Activated CD4-positive, alpha-beta T cell treated with anti-CD3 and anti-CD28 coated beads, Interleukin-2, amount 10 ng/mL, durations not matched to agents 7 days and 5 days (primary cell): ENCODE measurements at regions of chr7 and their contacts with region 1.

Region 1: DNA sequence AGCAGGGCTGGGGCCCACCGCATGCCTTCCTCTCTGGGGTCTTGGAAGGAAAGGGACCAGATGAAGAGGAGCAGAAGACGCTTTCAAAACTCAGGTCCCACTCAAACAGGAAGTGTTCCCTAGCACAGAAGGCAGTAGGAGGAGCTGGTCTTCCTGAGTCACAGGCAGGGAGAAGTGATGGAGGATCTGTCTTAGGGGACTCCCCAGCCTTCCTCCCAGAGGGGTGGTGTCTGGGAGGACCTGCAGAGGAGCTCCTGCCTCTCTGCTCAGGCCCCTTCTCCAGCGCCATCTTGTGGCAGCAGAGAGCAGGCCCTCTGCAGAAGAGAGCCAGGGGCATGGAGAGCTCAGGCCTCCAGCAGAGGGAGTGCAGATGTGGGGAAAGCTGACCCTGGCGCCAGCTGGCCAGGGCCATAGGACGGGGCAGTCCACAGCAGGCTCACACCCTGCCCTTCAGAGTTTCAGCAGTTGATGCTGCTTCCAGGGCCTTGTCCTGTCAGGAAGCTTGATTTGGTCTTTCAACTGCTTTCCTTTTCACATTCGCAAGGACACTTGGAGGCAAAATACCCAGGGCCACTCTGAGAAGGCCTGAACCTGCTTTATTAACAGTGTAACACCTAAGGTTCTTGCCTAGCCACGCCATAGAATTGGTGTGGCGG is 62.2 kb upstream of the TARP start:
- DNase-seq: peak; percentile 83
- H3K4me3 Mint-ChIP-seq: peak overlapping the region; percentile 69
- H3K27ac Mint-ChIP-seq: peak overlapping the region; percentile 76
- H3K4me1 Mint-ChIP-seq: peaks cover 55% of the 10 kb centered on the region
- H3K27me3 Mint-ChIP-seq: no peaks in the 10 kb centered on the region

Region 2: DNA sequence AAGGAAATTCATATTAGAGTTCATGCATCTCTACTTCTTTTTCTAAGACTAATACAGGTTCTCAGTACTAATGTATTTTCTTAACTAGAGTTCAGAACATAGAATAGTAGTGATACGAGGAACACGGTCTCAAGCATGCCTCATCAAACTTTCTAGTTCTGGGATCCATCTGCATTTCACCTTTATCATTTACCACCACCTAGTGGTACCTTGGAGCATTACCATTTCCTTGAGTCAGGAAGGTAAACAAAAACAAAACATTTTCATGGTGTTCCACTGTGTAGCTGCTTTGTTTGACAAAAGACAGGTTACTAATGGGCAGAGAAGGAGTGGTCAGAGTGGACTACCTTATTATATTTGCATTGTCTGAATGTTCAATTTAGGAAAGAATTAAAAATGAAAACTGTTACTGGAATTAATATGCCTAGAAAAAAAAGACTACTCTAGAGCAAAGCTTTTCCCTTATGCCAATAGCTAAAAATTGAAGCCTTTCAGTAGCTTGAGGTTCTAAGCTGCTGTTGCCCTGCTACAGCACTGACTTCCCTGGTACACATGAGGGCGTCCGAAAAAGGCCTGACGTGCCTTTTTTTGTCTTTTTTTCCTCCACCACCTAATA is 113.0 kb before region 1 on chr7:
- CTCF ChIA-PET with region 1: interaction called, 55 read pairs
- POLR2A ChIA-PET with region 1: interaction called, 3 read pairs
- DNase-seq: peak; percentile 63
- H3K4me3 Mint-ChIP-seq: no peak overlapping the region
- H3K27ac Mint-ChIP-seq: no peak overlapping the region
- H3K4me1 Mint-ChIP-seq: peaks cover 47% of the 10 kb centered on the region
- H3K27me3 Mint-ChIP-seq: no peaks in the 10 kb centered on the region

Region 3: GRCh38 chr7:38318803-38319416 is 16.7 kb before region 1 on chr7:
- CTCF ChIA-PET with region 1: interaction called, 26 read pairs
- POLR2A ChIA-PET with region 1: no interaction called
- DNase-seq: no peak
- H3K4me3 Mint-ChIP-seq: no peak overlapping the region
- H3K27ac Mint-ChIP-seq: no peak overlapping the region
- H3K4me1 Mint-ChIP-seq: peaks cover 32% of the 10 kb centered on the region
- H3K27me3 Mint-ChIP-seq: no peaks in the 10 kb centered on the region

Region 4: DNA sequence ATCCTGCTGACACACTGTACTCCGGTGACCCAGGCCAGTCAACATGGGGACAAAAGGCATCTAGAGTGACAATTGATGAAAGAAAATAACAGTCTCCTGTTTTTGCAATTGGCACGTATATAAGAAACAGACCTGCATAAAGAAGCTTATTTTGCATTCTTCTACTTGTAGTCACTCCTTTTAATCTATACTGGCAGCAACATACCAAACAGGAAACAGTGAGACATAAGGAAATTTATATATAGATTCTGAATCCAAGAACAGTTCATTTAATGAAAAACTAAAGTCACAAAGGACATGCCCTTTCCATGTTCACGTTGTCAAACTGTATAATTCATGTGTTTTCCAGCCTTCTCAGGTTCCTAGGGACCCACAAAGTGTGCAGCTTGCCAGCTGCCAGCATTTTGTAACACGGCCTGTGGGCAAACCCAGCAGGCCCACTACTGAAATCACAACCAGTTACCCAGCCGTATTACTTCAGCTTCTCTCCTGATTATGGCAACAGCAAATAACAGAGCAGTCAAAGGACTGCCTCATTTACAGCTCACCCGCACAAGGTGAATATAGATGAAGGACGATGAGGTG is 223.2 kb after region 1 on chr7:
- CTCF ChIA-PET with region 1: no interaction called
- POLR2A ChIA-PET with region 1: no interaction called
- DNase-seq: no peak
- H3K4me3 Mint-ChIP-seq: no peak overlapping the region
- H3K27ac Mint-ChIP-seq: no peak overlapping the region
- H3K4me1 Mint-ChIP-seq: no peaks in the 10 kb centered on the region
- H3K27me3 Mint-ChIP-seq: peaks cover 2% of the 10 kb centered on the region